ENCODE measurements at regions of chr15 and their contacts with region 1.

Region 1: GRCh38 chr15:81265944-81266775 is 57.8 kb downstream of the STARD5 start:
- DNase-seq: peak; percentile 93
- H3K4me3 Mint-ChIP-seq: peak overlapping the region; percentile 65
- H3K27ac Mint-ChIP-seq: no peak overlapping the region
- H3K4me1 Mint-ChIP-seq: peaks cover 29% of the 10 kb centered on the region
- H3K27me3 Mint-ChIP-seq: no peaks in the 10 kb centered on the region

Region 2: DNA sequence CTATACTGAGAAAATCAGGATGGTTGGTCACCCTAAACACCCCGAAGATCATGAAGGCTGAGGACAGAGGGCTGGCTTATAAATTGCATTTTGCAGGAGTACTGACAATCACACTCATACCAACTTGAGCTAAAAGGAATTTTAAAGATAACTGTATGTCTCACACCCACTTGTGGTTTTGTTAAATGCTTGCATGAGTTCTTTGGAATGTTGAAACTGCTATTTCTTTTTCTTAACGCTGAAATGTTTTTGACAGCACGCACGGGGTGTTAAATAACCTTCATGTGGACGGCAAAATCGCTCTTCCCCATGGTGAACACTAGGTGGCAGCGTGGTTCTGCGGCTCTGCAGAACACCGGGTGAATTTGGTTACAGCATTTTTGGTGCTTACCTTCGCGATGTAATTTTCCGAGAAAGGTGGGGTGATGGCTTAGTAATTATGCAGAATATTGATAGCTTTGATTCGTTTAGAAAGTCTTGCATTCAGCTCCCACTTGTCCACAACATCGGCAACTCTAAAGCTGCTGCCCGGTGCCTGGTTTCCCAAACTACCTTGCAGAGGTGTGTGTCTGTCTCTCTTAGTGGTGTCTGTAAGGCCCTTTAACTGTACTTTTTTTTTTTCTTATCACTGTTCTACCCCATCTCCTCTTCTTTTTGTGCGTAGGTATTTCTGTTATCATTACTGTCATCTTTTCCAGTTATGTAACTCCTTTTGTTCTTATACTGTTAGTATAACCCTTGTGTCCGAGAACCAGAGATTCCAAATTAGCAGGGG is 810.3 kb before region 1 on chr15:
- CTCF ChIA-PET with region 1: interaction called, 3 read pairs
- intact Hi-C with region 1: loop called (anchors 1 kb)
- DNase-seq: peak; percentile 63
- H3K4me3 Mint-ChIP-seq: no peak overlapping the region
- H3K27ac Mint-ChIP-seq: no peak overlapping the region
- H3K4me1 Mint-ChIP-seq: peaks cover 3% of the 10 kb centered on the region
- H3K27me3 Mint-ChIP-seq: peaks cover 10% of the 10 kb centered on the region

Region 3: GRCh38 chr15:81000624-81001151 is 265.5 kb before region 1 on chr15 and contains the start of gene TLNRD1:
- CTCF ChIA-PET with region 1: interaction called, 19 read pairs
- intact Hi-C with region 1: loop called (anchors 1 kb)
- DNase-seq: peak; percentile 92
- H3K4me3 Mint-ChIP-seq: peak within 1 kb of the TSS; percentile 86
- H3K27ac Mint-ChIP-seq: peak within 1 kb of the TSS; percentile 94
- H3K4me1 Mint-ChIP-seq: peaks cover 40% of the 10 kb centered on the region
- H3K27me3 Mint-ChIP-seq: no peaks in the 10 kb centered on the region
- total RNA-seq, gene TLNRD1: 15.9 to 16.6 TPM

Region 4: GRCh38 chr15:81146466-81146865 is 119.7 kb before region 1 on chr15:
- CTCF ChIA-PET with region 1: interaction called, 16 read pairs
- intact Hi-C with region 1: no loop called
- DNase-seq: no peak
- H3K4me3 Mint-ChIP-seq: no peak overlapping the region
- H3K27ac Mint-ChIP-seq: no peak overlapping the region
- H3K4me1 Mint-ChIP-seq: no peaks in the 10 kb centered on the region
- H3K27me3 Mint-ChIP-seq: peaks cover 2% of the 10 kb centered on the region

Region 5: GRCh38 chr15:81221449-81221848 is 44.7 kb before region 1 on chr15:
- CTCF ChIA-PET with region 1: interaction called, 16 read pairs
- intact Hi-C with region 1: no loop called
- DNase-seq: no peak
- H3K4me3 Mint-ChIP-seq: no peak overlapping the region
- H3K27ac Mint-ChIP-seq: no peak overlapping the region
- H3K4me1 Mint-ChIP-seq: no peaks in the 10 kb centered on the region
- H3K27me3 Mint-ChIP-seq: no peaks in the 10 kb centered on the region

Region 6: GRCh38 chr15:81308260-81308659 is 42.1 kb after region 1 on chr15:
- CTCF ChIA-PET with region 1: interaction called, 11 read pairs
- intact Hi-C with region 1: no loop called
- DNase-seq: no peak
- H3K4me3 Mint-ChIP-seq: no peak overlapping the region
- H3K27ac Mint-ChIP-seq: peak overlapping the region; percentile 24
- H3K4me1 Mint-ChIP-seq: peaks cover 75% of the 10 kb centered on the region
- H3K27me3 Mint-ChIP-seq: no peaks in the 10 kb centered on the region

Region 7: GRCh38 chr15:81400640-81401236 is 134.6 kb after region 1 on chr15:
- CTCF ChIA-PET with region 1: interaction called, 98 read pairs
- intact Hi-C with region 1: loop called (anchors 2 kb)
- DNase-seq: no peak
- H3K4me3 Mint-ChIP-seq: no peak overlapping the region
- H3K27ac Mint-ChIP-seq: no peak overlapping the region
- H3K4me1 Mint-ChIP-seq: no peaks in the 10 kb centered on the region
- H3K27me3 Mint-ChIP-seq: no peaks in the 10 kb centered on the region

Region 8: DNA sequence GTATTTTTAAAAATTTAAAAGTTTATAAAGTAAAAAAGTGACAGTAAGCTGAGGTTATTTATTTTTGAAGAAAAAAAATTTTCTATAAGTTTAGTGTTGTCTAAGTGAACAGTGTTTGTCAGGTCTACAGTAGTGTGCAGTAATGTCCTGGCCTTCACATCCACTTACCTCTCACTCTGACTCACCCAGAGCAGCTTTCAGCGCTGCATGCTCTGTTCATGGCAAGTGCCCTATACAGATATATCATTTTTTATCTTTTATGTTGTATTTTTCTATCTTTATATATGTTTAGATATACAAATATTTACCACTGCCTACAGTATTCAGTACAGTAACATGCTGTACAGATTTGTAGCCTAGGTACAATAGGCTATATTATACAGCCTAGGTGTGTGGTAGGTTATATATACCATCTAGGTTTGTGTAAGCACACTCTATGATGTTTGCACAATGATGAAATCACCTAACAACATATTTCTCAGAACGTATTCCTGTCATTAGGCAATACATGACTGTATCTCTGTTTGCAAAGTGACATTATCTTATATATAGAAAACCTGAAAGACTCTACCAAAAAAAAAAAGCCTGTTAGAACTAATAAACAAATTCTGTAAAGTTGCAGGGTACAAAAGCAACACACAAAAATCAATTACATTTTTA is 183.8 kb after region 1 on chr15:
- CTCF ChIA-PET with region 1: no interaction called
- intact Hi-C with region 1: no loop called
- DNase-seq: no peak
- H3K4me3 Mint-ChIP-seq: no peak overlapping the region
- H3K27ac Mint-ChIP-seq: no peak overlapping the region
- H3K4me1 Mint-ChIP-seq: no peaks in the 10 kb centered on the region
- H3K27me3 Mint-ChIP-seq: peaks cover 5% of the 10 kb centered on the region